ENCODE measurements at regions of chr9 and their contacts with region 1.

Region 1: DNA sequence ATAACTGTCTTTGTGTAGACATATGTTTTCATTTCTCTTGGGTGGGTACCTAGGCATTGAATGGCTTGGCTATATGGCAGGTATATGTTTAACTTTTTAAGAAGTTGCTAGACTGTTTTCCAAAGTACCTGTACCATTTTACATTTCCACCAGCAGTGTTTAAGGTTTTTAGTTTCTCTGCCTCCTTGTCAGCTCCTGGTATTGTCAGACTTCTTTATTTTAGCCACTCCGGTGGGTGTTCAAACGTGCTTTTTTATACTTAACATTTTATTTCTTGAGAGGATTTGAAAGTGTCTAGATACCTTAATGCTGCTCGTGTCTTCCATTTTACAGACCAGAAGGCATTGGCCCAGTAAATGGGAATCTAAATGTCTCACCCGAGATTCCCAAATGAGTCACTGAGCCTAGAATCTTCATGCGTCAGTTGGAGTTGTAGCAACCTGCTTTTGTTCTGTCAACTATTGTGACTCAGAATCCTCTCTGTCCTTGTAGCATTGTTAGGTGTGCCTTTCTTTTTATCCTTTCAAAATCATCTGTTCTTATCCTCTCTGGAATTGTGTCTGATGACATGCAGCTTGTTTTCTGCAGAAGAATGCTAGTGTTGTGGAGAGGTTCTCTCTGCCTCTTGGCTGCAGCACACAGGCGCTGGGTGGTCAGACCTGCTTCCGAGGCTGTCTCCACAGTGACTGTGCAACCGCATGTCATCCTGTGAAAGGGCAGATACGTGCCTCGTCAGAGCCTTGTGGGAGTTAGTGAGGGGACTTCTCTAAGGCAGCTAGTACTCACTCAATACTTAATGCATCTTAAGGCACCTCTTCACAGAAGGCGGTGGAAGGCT is 291.8 kb downstream of the AOPEP start:
- DNase-seq: peak; percentile 99
- H3K4me3 ChIP-seq: peak overlapping the region in 1 of 3 experiments; percentile 3
- H3K27ac ChIP-seq: peak overlapping the region; percentile 99
- H3K4me1 ChIP-seq: peaks cover 53% of the 10 kb centered on the region
- H3K27me3 ChIP-seq: no peaks in the 10 kb centered on the region
- CTCF ChIP-seq: no peak

Region 2: DNA sequence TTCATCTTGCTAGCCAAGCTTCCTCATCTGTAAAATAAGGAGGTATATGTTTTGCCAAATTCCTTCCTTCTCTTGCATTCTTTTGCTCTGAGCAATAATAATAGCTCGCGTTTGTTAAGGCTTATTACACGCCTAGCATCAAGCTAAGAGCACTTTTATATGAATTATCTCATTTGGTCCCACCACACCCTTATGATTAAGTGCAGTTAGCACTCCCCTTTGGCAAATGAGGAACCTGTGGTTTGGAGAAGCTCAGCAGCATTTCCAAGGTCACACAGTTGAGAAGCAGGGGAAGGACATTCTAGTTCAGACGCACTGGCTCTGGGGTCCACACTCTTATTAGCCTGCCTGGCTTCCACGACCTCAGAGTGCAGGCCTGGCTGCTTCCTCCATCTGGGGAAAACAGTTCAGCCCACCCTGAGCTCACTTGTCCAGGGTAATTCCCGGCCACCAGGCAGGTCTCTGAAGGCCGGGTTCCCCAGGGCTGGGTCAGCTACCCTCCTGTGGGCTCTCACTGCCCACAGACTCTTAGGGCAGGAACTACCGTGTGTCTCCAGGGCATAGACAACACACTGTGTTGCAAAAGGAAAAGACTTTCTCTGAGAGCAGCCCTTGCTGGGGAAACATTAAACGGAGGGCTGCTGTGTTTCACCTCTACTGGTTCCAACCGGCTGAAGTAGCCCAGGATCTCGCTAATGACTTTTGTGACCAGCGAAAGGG is 369.1 kb before region 1 on chr9:
- CTCF ChIA-PET with region 1: no interaction called
- dilution Hi-C with region 1: no loop called
- in situ Hi-C with region 1: no loop called
- intact Hi-C with region 1: no loop called
- DNase-seq: peak; percentile 86
- H3K4me3 ChIP-seq: no peak overlapping the region
- H3K27ac ChIP-seq: peak overlapping the region; percentile 59
- H3K4me1 ChIP-seq: peaks cover 41% of the 10 kb centered on the region
- H3K27me3 ChIP-seq: no peaks in the 10 kb centered on the region
- CTCF ChIP-seq: no peak

Region 3: GRCh38 chr9:94812343-94812742 is 206.0 kb before region 1 on chr9:
- CTCF ChIA-PET with region 1: no interaction called
- dilution Hi-C with region 1: no loop called
- in situ Hi-C with region 1: no loop called
- intact Hi-C with region 1: no loop called
- DNase-seq: peak; percentile 82
- H3K4me3 ChIP-seq: no peak overlapping the region
- H3K27ac ChIP-seq: no peak overlapping the region
- H3K4me1 ChIP-seq: peaks cover 10% of the 10 kb centered on the region
- H3K27me3 ChIP-seq: no peaks in the 10 kb centered on the region
- CTCF ChIP-seq: no peak

Region 4: GRCh38 chr9:94922098-94922607 is 96.2 kb before region 1 on chr9:
- CTCF ChIA-PET with region 1: no interaction called
- dilution Hi-C with region 1: loop called (anchors 5 kb)
- in situ Hi-C with region 1: no loop called
- intact Hi-C with region 1: no loop called
- DNase-seq: peak; percentile 69
- H3K4me3 ChIP-seq: no peak overlapping the region
- H3K27ac ChIP-seq: peak overlapping the region; percentile 62
- H3K4me1 ChIP-seq: peaks cover 64% of the 10 kb centered on the region
- H3K27me3 ChIP-seq: no peaks in the 10 kb centered on the region
- CTCF ChIP-seq: no peak

Region 5: GRCh38 chr9:95037789-95038517 is 19.6 kb after region 1 on chr9:
- CTCF ChIA-PET with region 1: interaction called, 6 read pairs
- dilution Hi-C with region 1: no loop called
- in situ Hi-C with region 1: no loop called
- intact Hi-C with region 1: loop called (anchors 2 kb)
- DNase-seq: peak; percentile 87
- H3K4me3 ChIP-seq: no peak overlapping the region
- H3K27ac ChIP-seq: peak overlapping the region; percentile 90
- H3K4me1 ChIP-seq: peaks cover 22% of the 10 kb centered on the region
- H3K27me3 ChIP-seq: no peaks in the 10 kb centered on the region
- CTCF ChIP-seq: no peak

Region 6: DNA sequence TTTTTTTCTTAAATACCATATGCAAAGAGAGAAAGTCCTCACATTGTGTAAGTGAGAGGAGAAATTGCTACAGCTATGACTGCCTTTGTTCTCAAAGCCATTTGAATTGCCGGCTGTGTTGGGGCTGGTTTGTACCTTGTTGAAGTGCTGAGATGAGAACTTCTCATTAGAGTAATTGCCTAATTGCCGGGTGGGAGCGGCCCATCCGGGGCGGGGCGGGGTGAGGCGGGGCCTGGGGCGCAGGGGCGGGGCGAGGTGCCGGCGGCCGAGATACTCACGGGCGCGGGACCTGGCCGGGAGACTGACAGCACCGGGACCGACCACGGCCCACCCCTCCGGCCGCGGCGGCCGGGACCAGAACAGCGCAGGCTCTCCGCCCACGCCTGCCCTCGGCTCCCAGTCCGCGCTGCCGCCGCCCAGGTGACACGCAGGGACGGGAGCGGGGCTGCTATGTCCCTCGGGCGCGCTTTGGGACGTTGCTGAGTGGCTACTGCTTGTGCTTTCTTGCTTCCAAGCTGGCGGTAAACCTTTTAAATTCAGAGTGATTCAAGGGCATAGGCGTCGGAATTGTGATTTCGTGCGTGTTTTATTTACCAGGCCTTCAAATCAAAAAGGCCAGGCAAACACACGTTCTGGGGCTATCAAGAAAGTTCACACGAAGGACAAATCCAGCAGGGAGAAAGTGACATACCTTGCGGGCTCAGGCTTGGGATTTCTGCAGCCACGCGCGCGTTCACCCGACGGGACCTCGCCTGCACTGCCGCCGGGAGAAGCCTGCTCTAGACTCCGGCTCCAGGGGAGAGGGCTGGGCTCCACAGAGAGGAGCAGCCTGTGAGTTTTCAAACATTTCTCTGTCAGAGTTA is 30.1 kb after region 1 on chr9:
- CTCF ChIA-PET with region 1: no interaction called
- dilution Hi-C with region 1: no loop called
- in situ Hi-C with region 1: no loop called
- intact Hi-C with region 1: loop called (anchors 1 kb)
- DNase-seq: peak; percentile 83
- H3K4me3 ChIP-seq: peak overlapping the region; percentile 61 to 66 (median 65)
- H3K27ac ChIP-seq: peak overlapping the region; percentile 78
- H3K4me1 ChIP-seq: peaks cover 15% of the 10 kb centered on the region
- H3K27me3 ChIP-seq: no peaks in the 10 kb centered on the region
- CTCF ChIP-seq: no peak